Heart right ventricle (tissue), 16 donors: ENCODE measurements at regions of chr9 and their contacts with region 1.

Region 1: GRCh38 chr9:127503947-127504782 is 52.9 kb downstream of the LRSAM1 start:
- DNase-seq: peak; percentile 81 to 88
- ATAC-seq: peak; percentile 71 to 91 (median 86)
- H3K4me3 ChIP-seq: no peak overlapping the region
- H3K27ac ChIP-seq: peak overlapping the region in 3 of 10 donors; percentile 8 to 41 (median 20)
- H3K4me1 ChIP-seq: peaks cover 0 to 13% (median 3%) of the 10 kb centered on the region in 9 donors
- H3K27me3 ChIP-seq: no peaks in the 10 kb centered on the region
- CTCF ChIP-seq: peak; percentile 79 to 96 (median 89)

Region 2: DNA sequence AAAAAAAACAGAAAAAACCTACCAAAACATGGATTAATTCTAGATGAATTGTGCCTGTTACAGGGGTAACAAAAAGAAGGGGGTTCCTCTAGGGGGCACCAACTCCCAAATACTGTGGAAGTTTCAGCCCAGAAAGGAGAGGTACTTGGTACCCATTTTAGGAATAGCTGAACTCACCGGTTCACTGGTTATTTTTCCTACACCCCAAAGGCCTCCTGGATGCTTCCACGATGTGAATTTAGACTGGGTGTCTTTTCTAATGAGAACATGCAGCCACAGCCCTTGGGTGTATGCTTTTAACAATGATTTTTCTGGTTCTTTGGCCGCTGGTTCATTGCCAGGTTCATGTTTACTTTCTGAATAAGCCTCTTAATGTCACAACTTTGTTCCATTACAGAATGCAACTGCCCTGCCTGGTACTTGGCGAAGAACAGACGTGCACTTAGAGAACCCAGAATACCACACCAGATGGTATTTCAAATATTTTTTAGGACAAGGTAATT is 192.9 kb before region 1 on chr9:
- intact Hi-C with region 1: no loop called
- DNase-seq: peak in 1 of 2 donors; percentile 58
- ATAC-seq: peak in 6 of 8 donors; percentile 8 to 64 (median 57)
- H3K4me3 ChIP-seq: no peak overlapping the region
- H3K27ac ChIP-seq: peak overlapping the region; percentile 8 to 83 (median 58)
- H3K4me1 ChIP-seq: peaks cover 0 to 64% (median 36%) of the 10 kb centered on the region in 9 donors
- H3K27me3 ChIP-seq: no peaks in the 10 kb centered on the region
- CTCF ChIP-seq: peak; percentile 45 to 71 (median 61)

Region 3: GRCh38 chr9:127396808-127397497 is 107.2 kb before region 1 on chr9 and contains the start of gene SLC2A8:
- intact Hi-C with region 1: no loop called
- DNase-seq: peak; percentile 97 to 99
- ATAC-seq: peak; percentile 96 to 99 (median 98)
- H3K4me3 ChIP-seq: peak within 1 kb of the TSS; percentile 72 to 95 (median 86)
- H3K27ac ChIP-seq: peak within 1 kb of the TSS; percentile 32 to 91 (median 88)
- H3K4me1 ChIP-seq: peaks cover 0 to 24% (median 20%) of the 10 kb centered on the region in 9 donors
- H3K27me3 ChIP-seq: no peaks in the 10 kb centered on the region
- CTCF ChIP-seq: peak in 6 of 9 donors; percentile 13 to 49 (median 24)
- total RNA-seq, gene SLC2A8: 10.0 to 26.7 (median 13.1) TPM

Region 4: GRCh38 chr9:127723450-127723849 is 219.3 kb after region 1 on chr9:
- intact Hi-C with region 1: loop called in 1 of 10 experiments (anchors 10 kb)
- DNase-seq: no peak
- ATAC-seq: peak in 1 of 8 donors; percentile 7
- H3K4me3 ChIP-seq: no peak overlapping the region
- H3K27ac ChIP-seq: peak overlapping the region in 1 of 10 donors; percentile 56
- H3K4me1 ChIP-seq: peaks cover 0 to 14% (median 12%) of the 10 kb centered on the region in 9 donors
- H3K27me3 ChIP-seq: peaks cover 0 to 6% (median 0%) of the 10 kb centered on the region in 7 donors
- CTCF ChIP-seq: no peak

Region 5: DNA sequence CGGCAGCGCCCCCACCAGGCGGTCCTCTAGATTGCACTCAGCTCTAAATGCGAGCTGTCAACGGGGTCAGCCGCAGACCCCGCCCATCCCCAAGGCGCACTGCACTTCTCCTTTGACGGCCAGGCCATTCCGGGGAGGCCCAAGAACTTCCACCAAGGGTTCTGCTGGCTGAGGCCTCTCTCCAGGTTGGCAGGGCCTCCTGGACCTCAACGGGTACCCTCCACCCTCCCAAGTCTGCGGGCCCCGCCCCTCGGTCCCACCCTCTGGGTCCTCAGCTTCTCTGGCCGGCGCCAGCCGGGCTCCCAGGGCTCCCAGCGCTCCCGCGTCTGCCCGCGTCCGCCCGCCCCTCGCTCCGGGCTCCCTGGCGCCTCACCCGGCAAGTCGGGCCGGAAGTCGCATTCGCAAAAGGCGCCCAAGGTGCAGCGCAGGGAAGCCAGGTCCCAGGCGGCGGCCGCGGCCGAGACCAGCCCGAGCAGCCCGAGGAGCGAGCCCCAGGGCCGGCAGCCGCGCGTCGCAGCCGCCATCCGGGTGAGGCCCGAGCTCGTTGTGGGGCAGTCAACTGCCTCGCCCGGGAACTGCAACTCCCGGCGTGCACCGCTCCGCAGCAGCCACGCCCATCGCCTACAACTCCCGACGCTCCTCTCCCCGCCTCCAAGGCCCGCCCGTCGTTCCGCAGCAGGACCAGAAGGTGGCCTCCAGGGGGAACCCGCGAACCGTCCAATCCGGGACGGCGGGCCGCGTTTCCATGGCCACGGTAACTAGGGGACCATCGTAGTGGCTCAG is 230.8 kb after region 1 on chr9 and contains the start of gene TOR2A:
- intact Hi-C with region 1: loop called in 8 of 10 experiments (anchors 5 to 10 kb)
- DNase-seq: peak; percentile 98 to 99
- ATAC-seq: peak; percentile 94 to 97 (median 95)
- H3K4me3 ChIP-seq: peak within 1 kb of the TSS; percentile 46 to 95 (median 78)
- H3K27ac ChIP-seq: peak within 1 kb of the TSS; percentile 90 to 99 (median 97)
- H3K4me1 ChIP-seq: peaks cover 10 to 35% (median 19%) of the 10 kb centered on the region in 9 donors
- H3K27me3 ChIP-seq: no peaks in the 10 kb centered on the region
- CTCF ChIP-seq: peak; percentile 90 to 99 (median 95)
- total RNA-seq, gene TOR2A: 1.5 to 6.3 (median 2.2) TPM

Region 6: GRCh38 chr9:127927457-127927987 is 423.4 kb after region 1 on chr9:
- intact Hi-C with region 1: loop called in 8 of 10 experiments (anchors 5 to 10 kb)
- DNase-seq: no peak
- ATAC-seq: no peak
- H3K4me3 ChIP-seq: peak overlapping the region in 3 of 10 donors; percentile 8 to 36 (median 18)
- H3K27ac ChIP-seq: no peak overlapping the region
- H3K4me1 ChIP-seq: peaks cover 19 to 38% (median 31%) of the 10 kb centered on the region in 9 donors
- H3K27me3 ChIP-seq: peaks cover 6 to 79% (median 39%) of the 10 kb centered on the region in 7 donors
- CTCF ChIP-seq: no peak